ENCODE measurements at regions of chr18 and their contacts with region 1.

Region 1: DNA sequence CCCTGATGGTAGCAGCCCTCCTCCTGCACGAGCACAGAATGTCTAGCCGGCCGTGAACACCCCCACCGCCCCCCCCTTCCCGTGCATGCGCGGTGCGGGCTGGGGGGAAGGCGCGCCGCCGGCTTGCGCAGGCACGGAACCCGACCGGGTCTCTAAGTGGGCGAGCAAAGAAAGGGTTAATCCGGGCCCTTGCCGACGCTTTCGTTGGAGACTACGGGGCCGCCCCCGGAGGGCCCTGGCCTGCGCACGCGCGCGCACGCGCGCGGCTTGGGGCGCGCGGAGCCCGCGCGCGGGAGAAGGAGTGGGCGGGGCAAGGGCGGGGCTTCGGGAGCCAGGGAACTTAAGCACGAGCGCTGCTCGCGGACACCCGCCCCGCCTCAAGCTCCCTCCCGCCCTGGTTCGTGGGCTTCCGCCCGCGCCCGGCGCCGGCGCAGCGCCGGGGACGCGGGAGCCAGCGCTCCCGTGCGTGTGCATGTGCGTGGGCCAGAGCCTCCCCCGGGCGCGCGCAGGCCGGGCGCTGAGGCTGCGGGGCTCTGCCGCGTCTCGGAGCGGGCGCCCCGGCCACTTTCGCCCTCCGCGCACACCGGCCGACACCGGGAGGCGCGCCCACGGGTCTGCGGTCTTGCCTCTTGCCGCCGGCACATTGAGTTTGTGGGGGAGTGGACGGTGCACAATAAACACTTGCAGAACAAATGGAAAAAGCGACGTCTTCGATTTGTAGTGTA is 617 bp upstream of the ZBTB14 start:
- DNase-seq: peak; percentile 93 to 98 (median 96)
- ATAC-seq: peak; percentile 69
- H3K4me3 ChIP-seq: peak overlapping the region; percentile 79 to 92
- H3K4me3 Mint-ChIP-seq: peak overlapping the region; percentile 93
- H3K27ac ChIP-seq: peak overlapping the region; percentile 90 to 94
- H3K27ac Mint-ChIP-seq: peak overlapping the region; percentile 97
- H3K4me1 ChIP-seq: peaks cover 27% of the 10 kb centered on the region
- H3K4me1 Mint-ChIP-seq: peaks cover 32% of the 10 kb centered on the region
- H3K27me3 ChIP-seq: no peaks in the 10 kb centered on the region
- H3K27me3 Mint-ChIP-seq: peaks cover 5% of the 10 kb centered on the region
- CTCF ChIP-seq: no peak

Region 2: GRCh38 chr18:5106730-5107129 is 189.4 kb before region 1 on chr18:
- CTCF ChIA-PET with region 1: interaction called, 4 read pairs
- POLR2A ChIA-PET with region 1: interaction called, 3 read pairs
- intact Hi-C with region 1: loop called in 1 of 2 experiments (anchors 10 kb)
- DNase-seq: peak in 1 of 9 experiments; percentile 20
- ATAC-seq: peak; percentile 56
- H3K4me3 ChIP-seq: no peak overlapping the region
- H3K4me3 Mint-ChIP-seq: no peak overlapping the region
- H3K27ac ChIP-seq: no peak overlapping the region
- H3K27ac Mint-ChIP-seq: no peak overlapping the region
- H3K4me1 ChIP-seq: no peaks in the 10 kb centered on the region
- H3K4me1 Mint-ChIP-seq: peaks cover 5% of the 10 kb centered on the region
- H3K27me3 ChIP-seq: no peaks in the 10 kb centered on the region
- H3K27me3 Mint-ChIP-seq: no peaks in the 10 kb centered on the region
- CTCF ChIP-seq: no peak

Region 3: GRCh38 chr18:5159080-5159479 is 137.1 kb before region 1 on chr18:
- CTCF ChIA-PET with region 1: interaction called, 3 read pairs
- POLR2A ChIA-PET with region 1: interaction called, 38 read pairs
- intact Hi-C with region 1: loop called (anchors 2 to 5 kb)
- DNase-seq: peak in 4 of 9 experiments; percentile 24 to 63 (median 42)
- ATAC-seq: peak; percentile 85
- H3K4me3 ChIP-seq: no peak overlapping the region
- H3K4me3 Mint-ChIP-seq: peak overlapping the region; percentile 63
- H3K27ac ChIP-seq: peak overlapping the region; percentile 17 to 48
- H3K27ac Mint-ChIP-seq: peak overlapping the region; percentile 94
- H3K4me1 ChIP-seq: peaks cover 37% of the 10 kb centered on the region
- H3K4me1 Mint-ChIP-seq: peaks cover 44% of the 10 kb centered on the region
- H3K27me3 ChIP-seq: no peaks in the 10 kb centered on the region
- H3K27me3 Mint-ChIP-seq: no peaks in the 10 kb centered on the region
- CTCF ChIP-seq: no peak

Region 4: GRCh38 chr18:5237723-5238370 is 58.3 kb before region 1 on chr18:
- CTCF ChIA-PET with region 1: interaction called, 27 read pairs
- POLR2A ChIA-PET with region 1: interaction called, 192 read pairs
- intact Hi-C with region 1: loop called (anchors 1 kb)
- DNase-seq: peak; percentile 78 to 94 (median 85)
- ATAC-seq: peak; percentile 87
- H3K4me3 ChIP-seq: peak overlapping the region; percentile 82 to 85
- H3K4me3 Mint-ChIP-seq: peak overlapping the region; percentile 95
- H3K27ac ChIP-seq: peak overlapping the region; percentile 94 to 98
- H3K27ac Mint-ChIP-seq: peak overlapping the region; percentile 98
- H3K4me1 ChIP-seq: peaks cover 28% of the 10 kb centered on the region
- H3K4me1 Mint-ChIP-seq: peaks cover 53% of the 10 kb centered on the region
- H3K27me3 ChIP-seq: no peaks in the 10 kb centered on the region
- H3K27me3 Mint-ChIP-seq: no peaks in the 10 kb centered on the region
- CTCF ChIP-seq: no peak

Region 5: DNA sequence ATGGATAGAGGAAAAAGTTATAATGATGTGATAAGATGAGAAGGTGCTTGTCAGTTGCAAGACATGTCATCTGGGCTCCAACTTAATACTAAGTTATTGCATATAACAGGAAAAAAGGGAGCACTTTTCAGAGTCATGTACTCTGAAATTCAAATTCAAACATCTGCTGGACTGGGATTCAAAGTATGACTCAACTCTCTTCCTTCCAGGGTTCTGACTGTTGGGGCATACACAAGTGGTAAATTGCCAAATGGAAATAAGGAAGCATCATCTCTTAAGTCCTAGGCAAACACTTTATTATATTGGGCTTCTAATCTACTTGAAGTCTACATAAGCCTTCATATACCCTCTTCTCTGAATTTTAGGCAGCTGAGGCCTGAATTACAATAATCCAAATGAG is 45.5 kb before region 1 on chr18:
- CTCF ChIA-PET with region 1: no interaction called
- POLR2A ChIA-PET with region 1: interaction called, 12 read pairs
- intact Hi-C with region 1: no loop called
- DNase-seq: no peak
- ATAC-seq: no peak
- H3K4me3 ChIP-seq: no peak overlapping the region
- H3K4me3 Mint-ChIP-seq: no peak overlapping the region
- H3K27ac ChIP-seq: no peak overlapping the region
- H3K27ac Mint-ChIP-seq: no peak overlapping the region
- H3K4me1 ChIP-seq: no peaks in the 10 kb centered on the region
- H3K4me1 Mint-ChIP-seq: no peaks in the 10 kb centered on the region
- H3K27me3 ChIP-seq: no peaks in the 10 kb centered on the region
- H3K27me3 Mint-ChIP-seq: peaks cover 10% of the 10 kb centered on the region
- CTCF ChIP-seq: no peak

Region 6: DNA sequence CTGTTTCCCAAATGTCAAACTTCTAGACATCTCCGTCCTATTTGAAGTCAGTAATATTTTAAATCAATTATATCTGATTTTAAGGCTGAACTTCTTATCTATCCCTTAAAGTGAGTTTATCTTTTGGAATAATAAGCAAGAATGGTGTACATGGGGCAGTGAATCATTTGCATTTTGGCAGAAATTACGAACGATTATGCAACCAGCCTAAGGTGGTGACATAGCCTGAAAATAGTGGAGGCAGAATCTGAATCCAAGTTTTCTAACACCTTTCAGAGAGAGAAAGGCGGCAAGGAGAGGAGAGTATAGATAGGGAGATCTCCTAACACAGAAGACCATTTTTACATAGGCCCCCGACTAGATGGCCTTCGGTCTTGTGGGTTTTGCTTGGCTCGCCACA is 11.3 kb before region 1 on chr18:
- CTCF ChIA-PET with region 1: no interaction called
- POLR2A ChIA-PET with region 1: interaction called, 10 read pairs
- intact Hi-C with region 1: no loop called
- DNase-seq: no peak
- ATAC-seq: no peak
- H3K4me3 ChIP-seq: no peak overlapping the region
- H3K4me3 Mint-ChIP-seq: no peak overlapping the region
- H3K27ac ChIP-seq: no peak overlapping the region
- H3K27ac Mint-ChIP-seq: peak overlapping the region; percentile 49
- H3K4me1 ChIP-seq: peaks cover 7% of the 10 kb centered on the region
- H3K4me1 Mint-ChIP-seq: peaks cover 39% of the 10 kb centered on the region
- H3K27me3 ChIP-seq: no peaks in the 10 kb centered on the region
- H3K27me3 Mint-ChIP-seq: no peaks in the 10 kb centered on the region
- CTCF ChIP-seq: no peak

Region 7: GRCh38 chr18:5309888-5310470 is 13.8 kb after region 1 on chr18:
- CTCF ChIA-PET with region 1: interaction called, 4 read pairs
- POLR2A ChIA-PET with region 1: interaction called, 88 read pairs
- intact Hi-C with region 1: loop called in 1 of 2 experiments (anchors 1 kb)
- DNase-seq: peak in 8 of 9 experiments; percentile 17 to 77 (median 38)
- ATAC-seq: peak; percentile 93
- H3K4me3 ChIP-seq: peak overlapping the region; percentile 37 to 47
- H3K4me3 Mint-ChIP-seq: peak overlapping the region; percentile 88
- H3K27ac ChIP-seq: peak overlapping the region; percentile 28 to 78
- H3K27ac Mint-ChIP-seq: peak overlapping the region; percentile 92
- H3K4me1 ChIP-seq: peaks cover 18% of the 10 kb centered on the region
- H3K4me1 Mint-ChIP-seq: peaks cover 26% of the 10 kb centered on the region
- H3K27me3 ChIP-seq: no peaks in the 10 kb centered on the region
- H3K27me3 Mint-ChIP-seq: no peaks in the 10 kb centered on the region
- CTCF ChIP-seq: no peak

Region 8: DNA sequence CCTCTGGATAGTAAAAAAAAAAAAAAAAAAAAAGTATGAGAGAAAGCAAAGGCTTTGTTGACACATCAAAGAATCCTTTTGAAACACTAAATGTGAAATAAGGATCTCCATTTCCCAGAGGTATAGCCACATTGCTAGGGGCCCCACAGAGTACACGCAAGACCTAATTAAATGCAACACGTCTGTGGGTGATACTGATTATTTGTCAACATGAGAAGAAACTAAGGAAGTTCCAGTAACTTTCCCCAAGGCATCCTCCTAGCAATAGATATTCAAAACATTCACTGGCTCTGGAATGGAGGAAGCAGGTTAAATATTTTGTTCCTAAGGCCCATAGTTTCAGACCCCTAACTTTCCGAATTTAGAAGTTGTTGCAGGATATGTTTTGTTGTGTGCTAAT is 272.3 kb after region 1 on chr18:
- CTCF ChIA-PET with region 1: no interaction called
- POLR2A ChIA-PET with region 1: no interaction called
- intact Hi-C with region 1: no loop called
- DNase-seq: no peak
- ATAC-seq: no peak
- H3K4me3 ChIP-seq: no peak overlapping the region
- H3K4me3 Mint-ChIP-seq: no peak overlapping the region
- H3K27ac ChIP-seq: no peak overlapping the region
- H3K27ac Mint-ChIP-seq: no peak overlapping the region
- H3K4me1 ChIP-seq: no peaks in the 10 kb centered on the region
- H3K4me1 Mint-ChIP-seq: no peaks in the 10 kb centered on the region
- H3K27me3 ChIP-seq: no peaks in the 10 kb centered on the region
- H3K27me3 Mint-ChIP-seq: peaks cover 9% of the 10 kb centered on the region
- CTCF ChIP-seq: no peak

Region 9: DNA sequence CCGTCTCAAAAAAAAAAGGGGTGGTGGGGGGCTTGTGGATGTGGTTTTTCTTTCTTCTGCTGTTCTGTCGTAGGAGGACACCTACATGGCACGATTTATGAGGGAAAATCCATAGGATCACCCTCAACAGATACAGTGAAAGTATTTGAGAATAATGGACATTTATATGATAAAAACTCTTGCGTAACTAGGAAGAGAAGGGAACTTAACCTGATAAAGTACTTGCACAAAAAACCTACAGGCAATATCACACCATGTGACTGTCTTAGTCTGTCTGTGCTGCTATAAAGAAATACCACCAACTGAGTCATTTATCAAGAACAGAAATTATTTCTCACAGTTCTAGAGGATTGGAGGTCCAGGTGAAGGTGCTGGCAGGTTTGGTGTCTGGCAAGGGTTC is 1843.3 kb after region 1 on chr18:
- CTCF ChIA-PET with region 1: no interaction called
- POLR2A ChIA-PET with region 1: no interaction called
- intact Hi-C with region 1: no loop called
- DNase-seq: no peak
- ATAC-seq: no peak
- H3K4me3 ChIP-seq: no peak overlapping the region
- H3K4me3 Mint-ChIP-seq: no peak overlapping the region
- H3K27ac ChIP-seq: no peak overlapping the region
- H3K27ac Mint-ChIP-seq: no peak overlapping the region
- H3K4me1 ChIP-seq: no peaks in the 10 kb centered on the region
- H3K4me1 Mint-ChIP-seq: no peaks in the 10 kb centered on the region
- H3K27me3 ChIP-seq: no peaks in the 10 kb centered on the region
- H3K27me3 Mint-ChIP-seq: no peaks in the 10 kb centered on the region
- CTCF ChIP-seq: no peak

Measured in CD8-positive, alpha-beta T cell (primary cell).